ENCODE measurements at regions of chr5 and their contacts with region 1.

Region 1: DNA sequence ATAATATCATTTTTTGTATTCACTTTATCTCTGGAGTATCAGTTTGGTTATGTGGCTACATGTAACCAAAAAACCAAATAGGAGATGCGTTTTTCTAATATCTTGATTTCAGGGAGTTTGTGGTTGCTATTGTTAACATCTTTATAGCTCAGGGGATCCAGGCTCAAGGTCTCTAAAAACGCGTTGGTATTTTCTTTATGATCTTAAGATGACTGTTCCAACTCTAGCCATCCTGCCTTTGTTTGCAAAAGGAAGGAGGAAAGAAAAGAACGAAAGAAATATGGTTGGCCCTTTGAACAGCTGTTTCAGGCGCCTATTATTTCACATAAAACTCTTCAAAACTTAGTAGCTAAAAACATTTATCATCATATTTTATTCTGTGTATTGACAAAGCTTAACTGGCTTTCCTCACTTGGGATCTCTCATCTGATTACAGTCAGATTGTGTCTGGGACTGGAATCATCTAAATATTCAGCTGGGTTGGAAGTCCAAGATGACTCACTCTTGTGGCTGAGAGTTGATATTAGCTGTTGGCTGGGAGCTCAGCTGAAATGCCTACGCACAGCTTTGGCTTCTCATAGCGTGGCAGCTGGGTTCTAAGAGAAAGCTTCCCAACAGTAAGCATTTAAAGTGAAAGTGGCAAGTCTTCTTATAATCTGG is 60.1 kb downstream of the FAM174A start:
- DNase-seq: peak; percentile 96
- H3K4me3 ChIP-seq: peak overlapping the region in 2 of 3 experiments; percentile 2 to 54
- H3K27ac ChIP-seq: peak overlapping the region; percentile 87
- H3K4me1 ChIP-seq: peaks cover 21% of the 10 kb centered on the region
- H3K27me3 ChIP-seq: no peaks in the 10 kb centered on the region
- CTCF ChIP-seq: no peak
- POLR2A ChIP-seq: no peak

Region 2: GRCh38 chr5:100535060-100536005 is 59.9 kb before region 1 on chr5 and contains the start of gene FAM174A:
- CTCF ChIA-PET with region 1: interaction called, 3 read pairs
- POLR2A ChIA-PET with region 1: no interaction called
- dilution Hi-C with region 1: no loop called
- intact Hi-C with region 1: loop called (anchors 1 kb)
- DNase-seq: peak; percentile 98
- H3K4me3 ChIP-seq: peak within 1 kb of the TSS; percentile 40 to 71 (median 61)
- H3K27ac ChIP-seq: peak within 1 kb of the TSS; percentile 53
- H3K4me1 ChIP-seq: peaks cover 7% of the 10 kb centered on the region
- H3K27me3 ChIP-seq: no peaks in the 10 kb centered on the region
- CTCF ChIP-seq: no peak
- POLR2A ChIP-seq: peak; percentile 95
- total RNA-seq, gene FAM174A: 11.8 and 14.7 TPM in 2 replicates

Region 3: GRCh38 chr5:100553209-100553608 is 42.1 kb before region 1 on chr5:
- CTCF ChIA-PET with region 1: interaction called, 11 read pairs
- POLR2A ChIA-PET with region 1: interaction called, 3 read pairs
- dilution Hi-C with region 1: no loop called
- intact Hi-C with region 1: no loop called
- DNase-seq: no peak
- H3K4me3 ChIP-seq: no peak overlapping the region
- H3K27ac ChIP-seq: no peak overlapping the region
- H3K4me1 ChIP-seq: no peaks in the 10 kb centered on the region
- H3K27me3 ChIP-seq: no peaks in the 10 kb centered on the region
- CTCF ChIP-seq: no peak
- POLR2A ChIP-seq: no peak

Region 4: GRCh38 chr5:100576217-100576751 is 19.0 kb before region 1 on chr5:
- CTCF ChIA-PET with region 1: interaction called, 20 read pairs
- POLR2A ChIA-PET with region 1: interaction called, 15 read pairs
- dilution Hi-C with region 1: no loop called
- intact Hi-C with region 1: loop called (anchors 1 kb)
- DNase-seq: peak; percentile 83
- H3K4me3 ChIP-seq: peak overlapping the region in 1 of 3 experiments; percentile 32
- H3K27ac ChIP-seq: peak overlapping the region; percentile 92
- H3K4me1 ChIP-seq: peaks cover 24% of the 10 kb centered on the region
- H3K27me3 ChIP-seq: no peaks in the 10 kb centered on the region
- CTCF ChIP-seq: no peak
- POLR2A ChIP-seq: no peak

Region 5: GRCh38 chr5:100623719-100624118 is 28.4 kb after region 1 on chr5:
- CTCF ChIA-PET with region 1: interaction called, 10 read pairs
- POLR2A ChIA-PET with region 1: no interaction called
- dilution Hi-C with region 1: no loop called
- intact Hi-C with region 1: no loop called
- DNase-seq: peak; percentile 67
- H3K4me3 ChIP-seq: no peak overlapping the region
- H3K27ac ChIP-seq: no peak overlapping the region
- H3K4me1 ChIP-seq: peaks cover 4% of the 10 kb centered on the region
- H3K27me3 ChIP-seq: no peaks in the 10 kb centered on the region
- CTCF ChIP-seq: peak; percentile 32 to 46
- POLR2A ChIP-seq: no peak

Region 6: DNA sequence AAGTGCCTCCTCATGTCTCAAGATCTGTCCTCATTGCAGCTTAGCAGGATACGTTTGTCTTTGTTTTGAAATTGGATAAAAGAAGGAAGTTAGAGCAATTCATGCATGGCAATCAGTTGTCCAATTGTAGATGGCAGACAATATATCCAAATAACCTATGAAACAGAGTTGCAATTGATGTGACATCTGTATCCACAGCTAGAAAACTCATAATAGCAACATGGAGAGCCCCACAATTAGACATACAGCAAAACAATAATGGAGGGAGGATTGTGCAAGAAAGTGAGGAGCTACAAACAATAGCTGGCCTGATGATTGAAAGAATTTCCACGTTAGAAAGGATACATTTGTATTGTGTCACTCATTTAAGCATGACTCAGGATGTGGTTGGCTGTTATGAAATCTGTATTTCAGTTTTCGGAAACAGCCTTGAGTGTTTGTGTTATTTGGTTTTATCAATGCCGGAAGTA is 71.9 kb after region 1 on chr5:
- CTCF ChIA-PET with region 1: no interaction called
- POLR2A ChIA-PET with region 1: no interaction called
- dilution Hi-C with region 1: no loop called
- intact Hi-C with region 1: loop called (anchors 1 kb)
- DNase-seq: peak; percentile 54
- H3K4me3 ChIP-seq: no peak overlapping the region
- H3K27ac ChIP-seq: peak overlapping the region; percentile 66
- H3K4me1 ChIP-seq: peaks cover 20% of the 10 kb centered on the region
- H3K27me3 ChIP-seq: no peaks in the 10 kb centered on the region
- CTCF ChIP-seq: no peak
- POLR2A ChIP-seq: no peak

Region 7: DNA sequence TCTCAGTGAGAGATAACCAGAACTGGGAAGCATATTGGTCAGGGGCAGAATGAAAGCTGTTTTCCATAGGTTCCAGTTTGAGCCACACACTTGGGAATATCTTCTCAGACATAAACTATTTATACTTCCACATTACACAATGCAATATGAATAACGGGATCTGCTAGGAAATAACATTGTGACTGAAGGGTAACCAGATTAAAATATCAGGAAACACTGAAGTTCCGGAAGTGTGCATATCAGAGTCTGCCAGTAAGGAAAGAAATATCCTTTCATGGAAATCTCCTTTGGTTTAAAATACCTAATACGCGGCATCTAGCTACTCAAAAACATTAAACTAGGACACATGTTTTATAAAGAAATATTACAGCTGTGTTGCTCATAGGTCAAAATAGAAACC is 251.5 kb after region 1 on chr5:
- CTCF ChIA-PET with region 1: no interaction called
- POLR2A ChIA-PET with region 1: no interaction called
- dilution Hi-C with region 1: no loop called
- intact Hi-C with region 1: loop called (anchors 2 kb)
- DNase-seq: peak; percentile 96
- H3K4me3 ChIP-seq: peak overlapping the region in 1 of 3 experiments; percentile 31
- H3K27ac ChIP-seq: peak overlapping the region; percentile 89
- H3K4me1 ChIP-seq: peaks cover 41% of the 10 kb centered on the region
- H3K27me3 ChIP-seq: no peaks in the 10 kb centered on the region
- CTCF ChIP-seq: no peak
- POLR2A ChIP-seq: peak; percentile 65